ENCODE measurements at regions of chr15 and their contacts with region 1.

Region 1: GRCh38 chr15:64490598-64491259 is 30.4 kb downstream of the ZNF609 start:
- DNase-seq: no peak
- ATAC-seq: no peak
- H3K4me3 Mint-ChIP-seq: no peak overlapping the region
- H3K27ac Mint-ChIP-seq: no peak overlapping the region
- H3K4me1 Mint-ChIP-seq: peaks cover 43% of the 10 kb centered on the region
- H3K27me3 Mint-ChIP-seq: no peaks in the 10 kb centered on the region

Region 2: DNA sequence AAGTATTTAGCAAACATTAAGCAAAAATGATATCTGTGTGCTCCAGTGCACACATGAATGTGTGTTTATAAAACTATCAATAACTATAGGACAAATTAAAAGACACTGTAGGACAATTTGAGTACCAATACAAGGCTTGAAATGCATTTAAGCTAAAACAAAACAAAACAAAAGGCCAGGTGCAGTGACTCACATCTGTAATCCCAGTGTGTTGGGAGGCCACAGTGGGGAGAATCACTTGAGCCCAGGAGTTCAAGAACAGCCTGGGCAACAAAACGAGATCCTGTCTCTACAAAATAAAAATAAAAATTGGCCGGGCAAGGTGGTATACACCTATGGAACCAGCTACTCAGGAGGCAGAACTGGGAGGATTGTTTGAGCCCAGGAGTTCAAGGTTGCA is 185.5 kb before region 1 on chr15:
- CTCF ChIA-PET with region 1: no interaction called
- POLR2A ChIA-PET with region 1: no interaction called
- intact Hi-C with region 1: no loop called
- DNase-seq: no peak
- ATAC-seq: no peak
- H3K4me3 Mint-ChIP-seq: no peak overlapping the region
- H3K27ac Mint-ChIP-seq: no peak overlapping the region
- H3K4me1 Mint-ChIP-seq: peaks cover 11% of the 10 kb centered on the region
- H3K27me3 Mint-ChIP-seq: no peaks in the 10 kb centered on the region

Region 3: DNA sequence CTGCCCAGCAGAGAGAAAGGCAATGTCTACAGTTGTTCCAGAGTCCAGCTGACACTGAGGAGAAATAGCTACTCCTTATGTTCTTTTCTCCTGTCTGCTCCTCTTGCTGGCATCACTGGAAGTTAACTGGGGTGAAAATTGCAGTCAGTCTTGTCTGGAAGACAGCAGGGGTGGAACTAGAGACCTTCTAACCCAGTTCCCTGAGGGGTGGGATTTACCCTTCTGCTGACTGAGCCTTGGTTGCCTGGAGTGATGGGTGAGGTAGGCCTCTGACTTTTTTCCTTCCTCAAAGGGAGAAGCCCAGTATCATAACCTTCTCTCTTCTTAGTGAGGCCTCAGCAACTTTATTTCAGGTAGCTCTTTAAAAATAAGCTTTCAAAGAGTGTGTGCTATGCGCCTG is 14.2 kb before region 1 on chr15:
- CTCF ChIA-PET with region 1: interaction called, 3 read pairs
- POLR2A ChIA-PET with region 1: interaction called, 15 read pairs
- intact Hi-C with region 1: no loop called
- DNase-seq: no peak
- ATAC-seq: peak; percentile 63
- H3K4me3 Mint-ChIP-seq: no peak overlapping the region
- H3K27ac Mint-ChIP-seq: peak overlapping the region; percentile 51
- H3K4me1 Mint-ChIP-seq: peaks cover 28% of the 10 kb centered on the region
- H3K27me3 Mint-ChIP-seq: no peaks in the 10 kb centered on the region

Region 4: DNA sequence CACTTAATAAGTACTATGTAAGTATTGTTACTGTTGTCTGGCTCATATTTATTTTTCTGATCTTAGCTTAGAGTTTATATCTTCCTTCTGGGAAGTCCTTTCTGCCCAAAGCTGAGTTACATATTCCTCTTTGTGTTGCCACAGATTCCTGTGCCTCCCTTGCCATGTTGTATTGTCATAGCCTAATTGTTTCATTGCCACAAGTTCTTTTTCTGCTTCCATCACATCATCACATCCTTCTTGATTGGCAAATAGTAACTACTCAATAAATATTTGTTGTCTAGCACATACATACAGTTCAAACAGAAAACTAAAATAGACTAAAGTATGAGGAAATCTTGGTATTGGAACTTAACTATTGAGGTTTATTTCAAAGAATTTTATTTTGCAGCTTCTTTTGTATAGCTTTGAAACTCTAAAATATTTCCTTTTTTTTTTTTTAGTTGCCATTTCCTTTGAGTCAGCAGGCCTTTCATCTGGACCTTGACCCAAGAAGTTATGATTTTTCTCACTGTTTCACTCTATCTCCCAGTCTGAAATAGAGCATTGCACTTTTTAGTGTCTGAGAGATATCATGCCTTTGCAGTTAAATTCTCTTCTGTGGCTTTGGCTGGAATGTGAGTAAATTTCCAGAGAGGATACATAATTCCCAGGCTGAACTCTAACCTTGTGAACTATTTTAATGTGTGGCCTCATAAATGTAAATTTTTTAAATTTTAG is 67.9 kb after region 1 on chr15:
- CTCF ChIA-PET with region 1: no interaction called
- POLR2A ChIA-PET with region 1: no interaction called
- intact Hi-C with region 1: no loop called
- DNase-seq: no peak
- ATAC-seq: no peak
- H3K4me3 Mint-ChIP-seq: no peak overlapping the region
- H3K27ac Mint-ChIP-seq: no peak overlapping the region
- H3K4me1 Mint-ChIP-seq: peaks cover 53% of the 10 kb centered on the region
- H3K27me3 Mint-ChIP-seq: no peaks in the 10 kb centered on the region

Region 5: DNA sequence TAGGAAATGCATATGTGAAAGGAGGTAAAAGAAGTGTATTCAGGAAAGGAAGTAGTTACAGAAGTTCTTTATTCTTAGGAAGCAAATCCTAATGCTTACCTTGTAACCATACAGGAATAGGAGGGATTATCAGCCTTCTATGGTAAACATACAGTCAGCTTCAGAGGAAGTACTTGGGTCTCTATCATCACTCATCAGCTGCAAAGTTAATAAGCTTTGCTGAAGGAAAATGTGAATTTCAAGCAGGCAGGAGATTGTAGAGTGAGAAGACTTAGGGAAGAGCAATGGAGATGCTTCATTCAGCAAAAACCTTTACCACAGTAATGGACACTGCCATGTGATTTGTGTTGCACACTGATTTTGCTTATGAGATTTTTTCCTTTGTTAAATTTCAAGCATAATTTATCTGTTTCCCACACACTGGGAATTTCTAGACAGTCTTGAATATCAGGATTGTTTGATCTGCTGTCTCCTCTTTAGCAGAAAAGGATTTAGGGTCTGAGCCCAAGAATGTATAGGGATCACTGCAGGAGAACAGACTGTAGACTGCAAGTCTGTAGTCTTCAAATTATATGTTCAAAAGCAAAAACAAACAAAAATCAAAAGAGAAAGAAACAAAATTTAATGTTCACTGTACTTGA is 120.5 kb after region 1 on chr15:
- CTCF ChIA-PET with region 1: no interaction called
- POLR2A ChIA-PET with region 1: no interaction called
- intact Hi-C with region 1: no loop called
- DNase-seq: no peak
- ATAC-seq: no peak
- H3K4me3 Mint-ChIP-seq: no peak overlapping the region
- H3K27ac Mint-ChIP-seq: peak overlapping the region; percentile 8
- H3K4me1 Mint-ChIP-seq: peaks cover 39% of the 10 kb centered on the region
- H3K27me3 Mint-ChIP-seq: no peaks in the 10 kb centered on the region